ENCODE measurements at regions of chr11 and their contacts with region 1.

Region 1: GRCh38 chr11:57249384-57250319 is 12.6 kb upstream of the APLNR start:
- DNase-seq: peak; percentile 62
- H3K4me3 Mint-ChIP-seq: no peak overlapping the region
- H3K27ac Mint-ChIP-seq: no peak overlapping the region
- H3K4me1 Mint-ChIP-seq: peaks cover 10% of the 10 kb centered on the region
- H3K27me3 Mint-ChIP-seq: no peaks in the 10 kb centered on the region
- CTCF ChIP-seq: peak; percentile 93

Region 2: DNA sequence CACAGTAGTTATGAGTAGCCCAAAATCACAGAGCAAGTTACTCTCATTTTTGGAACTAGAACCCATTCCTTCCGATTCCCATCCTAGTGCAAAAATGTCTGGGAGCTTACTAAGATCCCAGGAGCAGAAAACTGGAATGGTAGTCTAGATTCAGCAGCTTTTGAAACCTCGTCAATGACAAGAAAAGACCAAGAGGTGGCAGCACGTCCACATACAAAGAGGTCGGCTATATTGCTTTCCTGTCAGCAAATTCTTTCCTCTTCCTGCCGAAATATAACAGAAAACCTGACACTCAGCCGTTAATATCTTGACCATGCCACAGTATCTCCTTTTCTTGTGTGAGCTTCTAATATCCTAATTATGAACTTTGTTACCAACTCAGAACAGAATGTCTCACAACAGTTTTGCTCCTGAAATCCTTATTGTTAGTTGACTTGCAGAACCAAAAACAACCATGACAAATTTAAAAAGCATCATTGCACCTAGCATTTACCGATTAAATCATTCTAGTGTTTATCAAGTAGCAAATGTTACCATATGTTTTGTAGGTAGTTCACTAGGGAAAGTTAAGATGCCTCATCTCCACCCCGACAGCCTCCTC is 408.3 kb before region 1 on chr11:
- CTCF ChIA-PET with region 1: interaction called, 436 read pairs
- POLR2A ChIA-PET with region 1: interaction called, 37 read pairs
- intact Hi-C with region 1: loop called (anchors 1 kb)
- DNase-seq: peak; percentile 78
- H3K4me3 Mint-ChIP-seq: no peak overlapping the region
- H3K27ac Mint-ChIP-seq: no peak overlapping the region
- H3K4me1 Mint-ChIP-seq: peaks cover 21% of the 10 kb centered on the region
- H3K27me3 Mint-ChIP-seq: no peaks in the 10 kb centered on the region
- CTCF ChIP-seq: peak; percentile 79

Region 3: DNA sequence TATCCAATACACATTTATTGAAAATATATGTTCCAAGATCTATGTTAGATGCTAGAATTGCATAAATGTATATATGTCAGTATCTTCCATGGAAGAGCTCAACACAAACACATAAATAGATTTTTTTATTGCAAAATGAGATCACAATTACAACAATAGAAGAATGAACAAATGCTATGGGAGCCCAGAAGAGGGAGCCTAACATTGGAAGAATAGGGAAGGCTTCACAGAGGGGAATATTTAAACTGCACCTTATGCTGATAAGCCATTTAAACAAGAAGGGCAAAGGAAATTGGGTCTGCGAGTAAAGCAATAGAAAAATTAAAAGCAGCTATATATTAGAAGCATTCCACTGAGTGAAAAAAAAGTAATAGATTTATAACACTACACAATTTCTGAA is 164.0 kb before region 1 on chr11:
- CTCF ChIA-PET with region 1: interaction called, 11 read pairs
- POLR2A ChIA-PET with region 1: interaction called, 3 read pairs
- intact Hi-C with region 1: no loop called
- DNase-seq: no peak
- H3K4me3 Mint-ChIP-seq: no peak overlapping the region
- H3K27ac Mint-ChIP-seq: no peak overlapping the region
- H3K4me1 Mint-ChIP-seq: no peaks in the 10 kb centered on the region
- H3K27me3 Mint-ChIP-seq: no peaks in the 10 kb centered on the region
- CTCF ChIP-seq: no peak

Region 4: GRCh38 chr11:57148621-57149020 is 101.0 kb before region 1 on chr11:
- CTCF ChIA-PET with region 1: interaction called, 11 read pairs
- POLR2A ChIA-PET with region 1: no interaction called
- intact Hi-C with region 1: no loop called
- DNase-seq: no peak
- H3K4me3 Mint-ChIP-seq: no peak overlapping the region
- H3K27ac Mint-ChIP-seq: no peak overlapping the region
- H3K4me1 Mint-ChIP-seq: no peaks in the 10 kb centered on the region
- H3K27me3 Mint-ChIP-seq: peaks cover 18% of the 10 kb centered on the region
- CTCF ChIP-seq: no peak

Region 5: DNA sequence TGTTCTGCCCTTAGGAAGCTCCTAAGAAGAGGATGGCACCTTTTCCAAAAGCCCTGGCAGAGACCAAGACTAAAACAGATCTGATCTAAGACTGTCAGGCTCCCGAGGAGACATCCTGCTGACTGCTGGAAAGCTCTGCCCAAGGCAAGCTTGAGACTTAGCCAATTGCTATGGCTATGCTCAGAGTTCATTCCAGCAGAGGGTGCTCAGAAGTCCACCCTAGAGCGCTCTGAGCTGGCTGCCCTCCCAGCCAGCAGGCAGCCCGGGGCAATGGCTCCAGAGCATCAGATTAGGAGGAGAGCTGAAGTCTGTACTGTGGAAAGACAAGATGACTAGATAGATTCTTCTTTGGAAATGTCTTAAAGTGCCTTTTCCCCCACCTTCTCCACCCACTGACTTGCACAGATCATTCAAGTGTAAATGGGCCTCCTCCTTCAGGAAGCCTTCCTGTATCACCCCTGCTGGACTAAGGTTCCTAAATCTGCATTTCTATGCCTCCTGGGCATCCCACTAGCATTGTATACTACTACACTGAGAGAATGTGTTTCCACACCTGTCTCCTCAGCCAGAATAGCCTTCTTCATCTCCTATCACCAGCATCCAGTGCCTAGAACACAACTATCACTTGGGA is 44.5 kb before region 1 on chr11:
- CTCF ChIA-PET with region 1: interaction called, 14 read pairs
- POLR2A ChIA-PET with region 1: no interaction called
- intact Hi-C with region 1: no loop called
- DNase-seq: peak; percentile 9
- H3K4me3 Mint-ChIP-seq: no peak overlapping the region
- H3K27ac Mint-ChIP-seq: no peak overlapping the region
- H3K4me1 Mint-ChIP-seq: no peaks in the 10 kb centered on the region
- H3K27me3 Mint-ChIP-seq: peaks cover 42% of the 10 kb centered on the region
- CTCF ChIP-seq: no peak

Region 6: GRCh38 chr11:57269571-57270021 is 19.9 kb after region 1 on chr11:
- CTCF ChIA-PET with region 1: interaction called, 33 read pairs
- POLR2A ChIA-PET with region 1: interaction called, 4 read pairs
- intact Hi-C with region 1: no loop called
- DNase-seq: no peak
- H3K4me3 Mint-ChIP-seq: no peak overlapping the region
- H3K27ac Mint-ChIP-seq: no peak overlapping the region
- H3K4me1 Mint-ChIP-seq: no peaks in the 10 kb centered on the region
- H3K27me3 Mint-ChIP-seq: no peaks in the 10 kb centered on the region
- CTCF ChIP-seq: no peak

Region 7: GRCh38 chr11:57379732-57380131 is 130.1 kb after region 1 on chr11:
- CTCF ChIA-PET with region 1: no interaction called
- POLR2A ChIA-PET with region 1: no interaction called
- intact Hi-C with region 1: no loop called
- DNase-seq: peak; percentile 46
- H3K4me3 Mint-ChIP-seq: no peak overlapping the region
- H3K27ac Mint-ChIP-seq: no peak overlapping the region
- H3K4me1 Mint-ChIP-seq: no peaks in the 10 kb centered on the region
- H3K27me3 Mint-ChIP-seq: peaks cover 52% of the 10 kb centered on the region
- CTCF ChIP-seq: no peak

Measured in MCF 10A (cell line).